PC-3 (cell line): ENCODE measurements at regions of chr2 and their contacts with region 1.

Region 1: GRCh38 chr2:25362049-25362433 is 20.3 kb upstream of the DNMT3A start:
- DNase-seq: peak; percentile 95
- ATAC-seq: peak; percentile 98
- H3K4me3 ChIP-seq: peak overlapping the region; percentile 69
- H3K27ac ChIP-seq: no peak overlapping the region
- H3K4me1 ChIP-seq: peaks cover 22% of the 10 kb centered on the region
- H3K27me3 ChIP-seq: no peaks in the 10 kb centered on the region
- CTCF ChIP-seq: peak; percentile 88

Region 2: GRCh38 chr2:25218100-25218499 is 143.9 kb before region 1 on chr2:
- CTCF ChIA-PET with region 1: interaction called, 11 read pairs
- POLR2A ChIA-PET with region 1: no interaction called
- intact Hi-C with region 1: no loop called
- DNase-seq: no peak
- ATAC-seq: no peak
- H3K4me3 ChIP-seq: no peak overlapping the region
- H3K27ac ChIP-seq: no peak overlapping the region
- H3K4me1 ChIP-seq: no peaks in the 10 kb centered on the region
- H3K27me3 ChIP-seq: no peaks in the 10 kb centered on the region
- CTCF ChIP-seq: no peak

Region 3: GRCh38 chr2:25376750-25377621 is 14.9 kb after region 1 on chr2:
- CTCF ChIA-PET with region 1: interaction called, 20 read pairs
- POLR2A ChIA-PET with region 1: no interaction called
- intact Hi-C with region 1: no loop called
- DNase-seq: peak; percentile 83
- ATAC-seq: peak; percentile 91
- H3K4me3 ChIP-seq: peak overlapping the region; percentile 60
- H3K27ac ChIP-seq: peak overlapping the region; percentile 82
- H3K4me1 ChIP-seq: peaks cover 35% of the 10 kb centered on the region
- H3K27me3 ChIP-seq: no peaks in the 10 kb centered on the region
- CTCF ChIP-seq: peak; percentile 96

Region 4: DNA sequence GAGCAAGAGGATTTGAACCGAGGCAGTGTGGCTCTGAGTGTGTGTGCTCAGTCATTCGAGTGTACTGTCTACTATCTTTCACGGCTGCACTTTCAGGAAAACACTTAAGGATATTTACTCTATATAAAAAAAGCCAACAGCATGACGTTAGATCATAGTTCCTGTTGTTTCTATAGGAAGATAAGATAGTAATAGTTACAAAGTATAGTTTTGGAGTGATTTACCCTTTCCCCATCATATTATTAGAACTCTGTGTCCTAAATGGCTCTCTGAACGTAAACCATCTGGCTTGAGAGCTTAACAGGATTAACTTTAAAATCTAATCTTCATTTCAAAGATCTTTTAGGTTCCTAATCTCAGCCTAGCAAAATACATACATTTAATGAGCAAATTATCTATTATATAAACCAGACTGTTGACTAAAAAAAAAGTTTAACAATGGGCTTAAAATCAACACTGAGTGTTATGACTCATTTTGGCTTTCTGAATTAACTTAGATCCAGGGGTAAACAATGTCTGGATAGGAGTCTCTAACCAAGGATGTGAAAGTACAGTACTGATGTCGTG is 130.0 kb after region 1 on chr2:
- CTCF ChIA-PET with region 1: interaction called, 12 read pairs
- POLR2A ChIA-PET with region 1: no interaction called
- intact Hi-C with region 1: no loop called
- DNase-seq: peak; percentile 82
- ATAC-seq: peak; percentile 72
- H3K4me3 ChIP-seq: peak overlapping the region; percentile 51; the same call in 1 of the 2 replicates
- H3K27ac ChIP-seq: peak overlapping the region; percentile 77
- H3K4me1 ChIP-seq: peaks cover 28% of the 10 kb centered on the region
- H3K27me3 ChIP-seq: no peaks in the 10 kb centered on the region
- CTCF ChIP-seq: no peak

Region 5: DNA sequence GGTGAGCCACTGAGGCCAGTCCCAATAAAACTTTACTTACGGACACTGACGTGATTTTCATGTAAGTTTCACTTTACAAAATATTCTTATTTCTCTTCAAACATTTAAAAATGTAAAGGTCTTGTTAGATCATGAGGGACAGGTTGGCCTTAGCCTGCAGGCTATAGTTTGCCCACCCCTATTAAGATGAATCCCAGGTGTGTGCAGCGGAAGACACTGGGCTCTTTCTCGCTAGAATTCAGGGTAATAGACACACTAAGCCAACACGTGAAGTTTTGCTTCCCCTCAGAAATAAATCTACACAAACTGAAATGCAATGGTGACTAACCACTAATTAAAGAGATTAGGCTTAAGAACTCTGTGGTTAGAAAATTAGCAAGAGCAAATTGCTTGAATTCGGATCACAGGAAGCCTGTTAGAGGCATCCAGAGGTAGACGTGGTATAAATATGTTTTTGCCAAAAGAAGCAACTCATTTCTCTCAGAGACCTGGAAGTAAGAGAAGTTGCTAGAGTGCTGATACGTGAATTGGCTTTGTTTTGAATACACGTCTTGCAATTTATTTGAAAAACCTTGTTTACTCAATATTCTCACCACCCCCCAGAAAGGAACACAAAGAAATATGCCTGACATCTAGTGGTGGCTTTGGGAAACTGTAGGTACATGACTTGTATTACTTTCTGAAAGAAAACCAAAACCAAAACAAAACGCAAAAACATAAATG is 159.8 kb after region 1 on chr2:
- CTCF ChIA-PET with region 1: interaction called, 10 read pairs
- POLR2A ChIA-PET with region 1: no interaction called
- intact Hi-C with region 1: loop called (anchors 1 kb)
- DNase-seq: peak; percentile 80
- ATAC-seq: peak; percentile 85
- H3K4me3 ChIP-seq: peak overlapping the region; percentile 52
- H3K27ac ChIP-seq: no peak overlapping the region
- H3K4me1 ChIP-seq: peaks cover 11% of the 10 kb centered on the region; the same call in 1 of the 2 replicates
- H3K27me3 ChIP-seq: no peaks in the 10 kb centered on the region
- CTCF ChIP-seq: peak; percentile 93

Region 6: GRCh38 chr2:25567406-25567805 is 205.4 kb after region 1 on chr2:
- CTCF ChIA-PET with region 1: no interaction called
- POLR2A ChIA-PET with region 1: no interaction called
- intact Hi-C with region 1: loop called (anchors 5 kb)
- DNase-seq: peak; percentile 67
- ATAC-seq: peak; percentile 85
- H3K4me3 ChIP-seq: no peak overlapping the region
- H3K27ac ChIP-seq: no peak overlapping the region
- H3K4me1 ChIP-seq: no peaks in the 10 kb centered on the region
- H3K27me3 ChIP-seq: no peaks in the 10 kb centered on the region
- CTCF ChIP-seq: peak; percentile 78

Region 7: DNA sequence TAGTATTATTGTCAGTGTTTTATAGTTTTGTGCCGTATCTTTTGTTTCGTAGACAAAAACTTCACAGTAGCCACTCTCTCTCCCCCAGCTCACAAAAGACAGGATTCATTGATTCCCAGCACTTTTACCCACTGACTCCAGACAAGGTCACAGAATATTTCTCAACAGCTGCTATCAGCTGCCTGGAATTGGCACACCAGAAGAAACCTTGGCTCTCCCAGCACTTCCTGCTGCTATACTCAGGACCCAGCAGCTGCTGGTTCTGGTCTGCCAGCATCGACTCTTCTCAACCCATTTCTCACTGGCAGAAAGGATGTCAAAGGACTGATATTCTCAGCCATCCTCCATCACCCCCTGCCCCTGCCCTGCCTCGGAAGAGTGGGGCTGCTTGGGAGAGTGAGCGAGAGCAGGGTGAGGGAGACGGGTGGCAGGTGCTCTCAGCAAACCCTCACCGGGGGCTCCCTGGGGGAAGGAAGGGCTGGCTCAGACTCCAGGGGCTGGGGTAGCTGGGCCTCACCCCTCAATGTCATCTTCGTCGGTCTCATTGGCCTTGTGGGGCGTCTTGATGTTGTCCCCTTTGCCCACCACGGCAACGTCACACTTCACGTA is 1122.0 kb after region 1 on chr2:
- CTCF ChIA-PET with region 1: no interaction called
- POLR2A ChIA-PET with region 1: no interaction called
- intact Hi-C with region 1: no loop called
- DNase-seq: no peak
- ATAC-seq: no peak
- H3K4me3 ChIP-seq: no peak overlapping the region
- H3K27ac ChIP-seq: no peak overlapping the region
- H3K4me1 ChIP-seq: no peaks in the 10 kb centered on the region
- H3K27me3 ChIP-seq: no peaks in the 10 kb centered on the region
- CTCF ChIP-seq: no peak